Posterior cingulate gyrus (tissue), 11 donors: ENCODE measurements at regions of chr22 and their contacts with region 1.

Region 1: DNA sequence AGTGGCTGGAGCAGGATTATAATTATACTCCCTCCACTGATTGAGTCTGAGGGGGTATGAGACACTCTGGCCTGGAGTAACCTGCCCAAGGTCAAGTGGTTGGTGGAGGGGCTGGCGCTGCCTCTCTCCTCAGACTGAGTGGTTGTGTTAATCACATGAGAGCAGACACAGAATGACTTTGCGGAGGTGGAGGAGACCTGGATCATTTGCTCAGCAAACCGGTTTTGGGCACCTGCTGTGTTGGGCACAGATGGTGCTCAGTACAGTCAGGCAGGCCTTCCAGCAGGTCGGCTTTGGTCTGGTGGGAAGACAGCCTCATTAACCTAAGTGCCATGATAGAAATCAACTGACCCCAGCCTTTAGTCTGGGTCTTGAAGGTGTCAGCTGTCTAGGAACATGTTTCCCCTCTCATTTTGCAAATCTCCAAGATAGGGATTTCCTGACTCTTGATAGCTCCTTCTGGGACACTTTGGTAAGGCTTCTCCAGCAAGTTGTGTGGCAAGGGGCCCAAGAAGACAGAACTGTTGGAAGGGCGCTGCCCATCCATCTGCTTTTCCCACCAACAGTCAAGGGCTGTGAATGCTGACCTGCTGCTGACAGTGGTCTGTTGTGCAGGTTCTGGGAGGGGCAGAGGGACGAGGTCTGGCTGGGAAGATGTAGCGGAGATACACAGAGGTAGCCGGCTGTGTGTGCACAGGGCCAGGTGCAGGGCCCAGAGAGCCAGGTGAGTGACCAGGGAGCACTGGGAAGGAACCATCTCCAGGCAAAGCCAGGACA is 12.1 kb downstream of the BCR start:
- DNase-seq: no peak

Region 2: GRCh38 chr22:23237201-23237798 is 44.9 kb after region 1 on chr22:
- intact Hi-C with region 1: loop called (anchors 5 kb)
- DNase-seq: peak; percentile 37 to 98 (median 86)